ENCODE measurements at regions of chr9 and their contacts with region 1.

Region 1: DNA sequence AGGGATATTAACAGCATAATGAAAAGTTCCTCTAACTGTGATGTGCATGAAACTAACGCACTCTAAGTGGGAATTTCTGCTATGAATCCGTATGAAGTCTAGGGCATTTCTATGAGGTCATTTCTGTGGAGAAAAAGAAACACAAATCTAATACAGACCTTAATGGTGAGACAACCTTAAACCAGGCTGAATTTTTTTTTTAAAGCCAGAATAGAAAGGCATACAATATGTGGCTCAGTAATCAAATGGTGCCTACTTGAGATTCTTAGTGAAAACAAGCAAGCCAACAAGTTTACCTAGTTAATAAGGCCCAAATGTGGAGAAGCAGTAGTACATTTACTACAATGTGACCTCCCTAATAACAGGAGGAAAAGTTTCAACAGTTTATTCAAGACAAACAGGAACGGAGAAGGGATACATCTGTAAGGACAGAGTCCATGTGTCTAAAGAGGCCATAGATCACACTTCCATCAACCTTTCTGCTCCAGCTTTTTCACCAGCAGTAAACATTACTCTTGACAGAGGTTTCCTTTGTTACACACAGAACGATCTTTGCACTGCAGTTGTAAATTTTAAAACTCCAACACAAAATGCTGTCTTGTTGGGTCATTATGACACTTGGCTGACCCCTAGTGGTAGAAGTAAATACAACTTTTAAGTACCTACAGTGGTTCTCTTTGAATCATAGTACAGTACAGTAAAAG is 26.2 kb downstream of the CARNMT1 start:
- DNase-seq: peak in 1 of 2 donors; percentile 34
- ATAC-seq: peak in 7 of 8 donors; percentile 67 to 89 (median 83)
- H3K4me3 ChIP-seq: no peak overlapping the region
- H3K27ac ChIP-seq: no peak overlapping the region
- H3K4me1 ChIP-seq: peaks cover 0 to 7% (median 0%) of the 10 kb centered on the region in 9 donors
- H3K27me3 ChIP-seq: no peaks in the 10 kb centered on the region
- CTCF ChIP-seq: peak; percentile 52 to 88 (median 82)

Region 2: GRCh38 chr9:74458832-74459231 is 543.0 kb before region 1 on chr9:
- intact Hi-C with region 1: no loop called
- DNase-seq: no peak
- ATAC-seq: no peak
- H3K4me3 ChIP-seq: no peak overlapping the region
- H3K27ac ChIP-seq: no peak overlapping the region
- H3K4me1 ChIP-seq: no peaks in the 10 kb centered on the region
- H3K27me3 ChIP-seq: no peaks in the 10 kb centered on the region
- CTCF ChIP-seq: no peak

Region 3: GRCh38 chr9:74773886-74774479 is 227.9 kb before region 1 on chr9:
- intact Hi-C with region 1: loop called (anchors 1 to 5 kb)
- DNase-seq: peak; percentile 65
- ATAC-seq: peak in 7 of 8 donors; percentile 40 to 83 (median 74)
- H3K4me3 ChIP-seq: no peak overlapping the region
- H3K27ac ChIP-seq: no peak overlapping the region
- H3K4me1 ChIP-seq: peaks cover 0 to 9% (median 0%) of the 10 kb centered on the region in 9 donors
- H3K27me3 ChIP-seq: peaks cover 0 to 23% (median 0%) of the 10 kb centered on the region in 7 donors
- CTCF ChIP-seq: peak; percentile 76 to 97 (median 93)

Region 4: DNA sequence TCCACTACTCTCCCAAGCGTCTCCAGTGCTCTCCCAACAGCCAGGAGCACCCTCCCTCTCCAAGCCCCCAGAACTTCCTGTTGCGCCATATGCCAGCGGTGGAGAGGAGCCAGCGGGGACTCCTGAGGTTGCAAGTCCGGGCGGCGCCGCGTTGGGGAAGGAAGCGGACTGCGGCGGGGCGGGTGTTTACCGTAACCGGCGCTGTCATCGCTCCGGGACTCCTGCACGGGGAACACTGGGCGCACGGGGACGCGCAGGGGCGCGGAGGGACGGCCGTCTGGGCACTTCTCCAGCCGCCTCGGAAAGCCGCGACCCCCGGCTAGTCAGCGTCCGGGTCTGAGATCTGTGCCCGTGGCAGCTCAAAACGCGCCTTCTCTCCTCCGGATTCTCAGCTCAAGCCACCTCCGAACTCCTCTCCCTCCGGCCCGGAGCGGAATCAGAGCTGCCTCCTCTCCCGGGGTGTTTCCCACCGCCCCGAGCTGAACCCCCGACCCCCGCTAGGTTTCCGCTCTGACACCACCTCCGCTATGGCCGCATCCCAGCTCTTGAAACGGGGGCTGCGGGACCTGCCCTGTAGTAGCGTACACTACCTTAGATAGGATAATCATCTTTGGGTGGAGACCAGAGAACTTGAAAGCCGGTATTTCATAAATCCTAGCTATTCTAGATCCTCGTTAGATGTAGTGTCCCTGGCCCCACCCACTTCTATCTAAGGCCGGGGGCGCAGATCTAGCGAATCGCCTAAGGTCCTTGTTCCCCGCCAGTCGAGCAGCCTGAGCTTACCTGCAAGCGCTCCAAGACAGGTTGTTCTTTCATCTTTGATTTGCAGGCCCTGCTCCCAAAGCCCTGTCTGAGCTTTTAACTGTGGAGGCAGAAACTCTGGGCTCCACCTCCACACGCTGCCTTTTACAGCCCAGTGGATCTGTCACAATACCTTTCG is 114.6 kb before region 1 on chr9 and contains the start of gene TRPM6:
- intact Hi-C with region 1: loop called in 1 of 10 experiments (anchors 10 kb)
- DNase-seq: peak; percentile 76 to 82
- ATAC-seq: peak; percentile 90 to 97 (median 96)
- H3K4me3 ChIP-seq: peak within 1 kb of the TSS in 9 of 10 donors; percentile 41 to 69 (median 66)
- H3K27ac ChIP-seq: peak within 1 kb of the TSS; percentile 25 to 87 (median 78)
- H3K4me1 ChIP-seq: peaks cover 0 to 16% (median 9%) of the 10 kb centered on the region in 9 donors
- H3K27me3 ChIP-seq: peaks cover 0 to 30% (median 10%) of the 10 kb centered on the region in 7 donors
- CTCF ChIP-seq: no peak
- total RNA-seq, gene TRPM6: 0.11 to 0.60 (median 0.21) TPM

Region 5: DNA sequence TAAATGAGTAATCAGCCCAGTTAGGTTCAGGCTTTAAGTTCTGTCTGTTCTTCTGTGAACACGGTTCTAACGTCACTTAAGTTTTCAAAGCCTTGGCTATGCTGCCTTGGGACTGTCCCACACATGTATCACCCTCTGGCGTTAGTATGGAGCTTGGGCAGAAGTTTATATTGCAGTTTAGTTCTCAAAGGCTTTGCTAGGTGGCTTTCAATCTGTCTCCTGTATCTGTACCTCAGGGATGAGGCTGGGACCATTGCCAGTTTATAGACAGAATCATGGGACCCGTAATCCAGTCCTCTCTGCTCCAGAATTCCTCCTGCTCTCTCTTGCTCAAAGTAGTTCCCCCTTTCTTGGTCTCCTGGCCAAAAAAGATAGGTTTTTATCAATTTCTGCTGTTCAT is 61.3 kb before region 1 on chr9:
- intact Hi-C with region 1: loop called in 1 of 10 experiments (anchors 10 kb)
- DNase-seq: no peak
- ATAC-seq: peak in 2 of 8 donors; percentile 47 to 66
- H3K4me3 ChIP-seq: no peak overlapping the region
- H3K27ac ChIP-seq: no peak overlapping the region
- H3K4me1 ChIP-seq: no peaks in the 10 kb centered on the region
- H3K27me3 ChIP-seq: no peaks in the 10 kb centered on the region
- CTCF ChIP-seq: peak in 5 of 9 donors; percentile 11 to 43 (median 27)

Region 6: GRCh38 chr9:74952281-74953151 is 49.4 kb before region 1 on chr9 and contains the start of gene C9orf40:
- intact Hi-C with region 1: loop called in 4 of 10 experiments (anchors 5 to 10 kb)
- DNase-seq: peak; percentile 91 to 93
- ATAC-seq: peak; percentile 95 to 99 (median 98)
- H3K4me3 ChIP-seq: peak within 1 kb of the TSS; percentile 60 to 98 (median 88)
- H3K27ac ChIP-seq: peak within 1 kb of the TSS; percentile 85 to 99 (median 96)
- H3K4me1 ChIP-seq: peaks cover 0 to 27% (median 17%) of the 10 kb centered on the region in 9 donors
- H3K27me3 ChIP-seq: no peaks in the 10 kb centered on the region
- CTCF ChIP-seq: peak; percentile 76 to 92 (median 86)
- total RNA-seq, gene C9orf40: 0.96 to 2.9 (median 1.9) TPM

Region 7: DNA sequence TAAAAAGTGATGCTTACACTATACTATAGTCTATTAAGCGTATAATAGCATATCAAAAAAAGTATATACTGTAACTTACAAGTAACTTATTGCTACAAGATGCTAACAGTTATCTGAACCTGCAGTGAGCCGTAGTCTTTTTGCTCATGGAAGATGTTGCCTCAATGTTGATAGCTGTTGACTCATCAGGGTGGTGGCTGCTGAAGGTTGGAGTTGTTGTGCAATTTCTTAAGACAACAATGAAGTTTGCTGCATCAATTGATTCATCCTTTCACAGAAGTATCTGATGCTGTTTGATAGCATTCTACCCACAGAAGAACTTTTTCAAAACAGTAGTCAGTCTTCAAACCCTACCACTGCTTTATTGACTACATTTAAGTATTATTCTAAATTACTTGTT is 41.3 kb before region 1 on chr9:
- intact Hi-C with region 1: loop called in 2 of 10 experiments (anchors 5 to 10 kb)
- DNase-seq: no peak
- ATAC-seq: no peak
- H3K4me3 ChIP-seq: no peak overlapping the region
- H3K27ac ChIP-seq: no peak overlapping the region
- H3K4me1 ChIP-seq: no peaks in the 10 kb centered on the region
- H3K27me3 ChIP-seq: no peaks in the 10 kb centered on the region
- CTCF ChIP-seq: no peak

Region 8: DNA sequence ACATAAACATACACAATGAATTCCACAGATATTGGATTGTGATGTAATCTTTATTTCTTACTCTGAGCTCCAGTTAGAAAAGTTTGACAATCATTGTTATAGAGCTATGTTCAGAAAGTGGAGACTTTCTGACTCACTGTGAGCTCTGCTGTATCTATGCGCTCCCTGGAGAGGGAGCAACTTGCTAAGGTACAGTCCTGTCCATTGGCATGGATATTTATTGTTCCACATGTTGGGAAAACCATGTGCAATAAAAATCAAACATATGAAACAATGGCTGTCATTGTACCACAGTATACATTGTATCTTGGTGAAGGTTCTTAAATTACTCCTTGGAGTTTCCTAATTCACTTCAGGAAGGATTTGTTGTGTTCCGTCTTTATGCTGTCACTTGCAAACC is 59.3 kb after region 1 on chr9:
- intact Hi-C with region 1: no loop called
- DNase-seq: no peak
- ATAC-seq: no peak
- H3K4me3 ChIP-seq: no peak overlapping the region
- H3K27ac ChIP-seq: no peak overlapping the region
- H3K4me1 ChIP-seq: peaks cover 0 to 5% (median 0%) of the 10 kb centered on the region in 9 donors
- H3K27me3 ChIP-seq: no peaks in the 10 kb centered on the region
- CTCF ChIP-seq: no peak

Region 9: DNA sequence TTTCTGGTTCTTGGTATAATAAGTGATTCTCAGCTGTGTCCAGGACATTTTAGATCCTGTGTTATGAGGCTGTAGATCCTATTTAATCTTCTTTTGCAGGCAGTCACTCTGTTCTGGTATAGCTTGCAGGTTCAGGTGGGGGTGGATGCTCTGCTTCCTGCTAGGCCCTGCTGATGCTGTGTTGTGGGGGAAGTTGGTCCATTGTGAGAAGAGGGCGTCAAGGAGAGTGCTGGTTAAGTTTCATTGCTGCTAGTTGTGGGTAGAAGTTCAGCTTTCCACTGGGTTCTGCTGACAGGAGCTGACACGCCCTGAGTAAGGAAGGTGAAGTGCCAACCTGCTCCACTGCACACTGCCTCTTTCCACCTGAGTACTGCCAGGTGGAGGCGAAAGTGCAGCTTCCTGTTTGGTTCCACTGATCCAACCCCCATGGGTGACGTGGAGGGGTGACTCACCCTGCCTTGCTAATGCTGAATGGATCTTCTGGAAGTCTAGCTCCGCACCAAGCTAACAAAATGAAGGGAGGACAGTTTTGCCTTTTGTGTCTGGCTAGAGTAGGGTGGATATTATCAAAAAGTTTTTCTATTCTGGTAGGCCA is 69.8 kb after region 1 on chr9:
- intact Hi-C with region 1: loop called in 5 of 10 experiments (anchors 5 kb)
- DNase-seq: no peak
- ATAC-seq: peak in 1 of 8 donors; percentile 15
- H3K4me3 ChIP-seq: no peak overlapping the region
- H3K27ac ChIP-seq: no peak overlapping the region
- H3K4me1 ChIP-seq: no peaks in the 10 kb centered on the region
- H3K27me3 ChIP-seq: no peaks in the 10 kb centered on the region
- CTCF ChIP-seq: no peak

Region 10: DNA sequence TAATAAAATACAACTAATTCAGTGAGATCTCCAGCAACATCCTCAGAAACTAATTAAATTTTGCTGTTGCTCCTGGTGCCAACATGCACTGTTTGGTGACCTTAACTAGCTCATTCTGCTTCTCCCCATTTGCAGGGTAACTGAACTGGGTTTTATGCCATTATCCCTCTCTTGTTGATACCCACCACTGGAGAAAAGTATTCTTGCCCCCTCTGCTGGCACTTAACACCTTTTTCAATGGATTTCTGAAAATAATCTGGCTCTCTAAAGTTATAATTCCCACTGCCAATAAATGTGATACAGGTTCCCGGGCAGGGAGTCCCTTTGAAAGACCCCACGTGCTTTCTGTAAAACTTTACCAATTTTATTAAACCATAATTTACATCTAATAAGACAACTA is 480.7 kb after region 1 on chr9:
- intact Hi-C with region 1: no loop called
- DNase-seq: no peak
- ATAC-seq: no peak
- H3K4me3 ChIP-seq: no peak overlapping the region
- H3K27ac ChIP-seq: no peak overlapping the region
- H3K4me1 ChIP-seq: no peaks in the 10 kb centered on the region
- H3K27me3 ChIP-seq: no peaks in the 10 kb centered on the region
- CTCF ChIP-seq: no peak